GM10248 (cell line): ENCODE measurements at regions of chr3 and their contacts with region 1.

Region 1: GRCh38 chr3:58532794-58533220 is 4.2 kb downstream of the ACOX2 start:
- DNase-seq: peak; percentile 90
- CTCF ChIP-seq: peak; percentile 94

Region 2: GRCh38 chr3:58324391-58325390 is 208.1 kb before region 1 on chr3:
- CTCF ChIA-PET with region 1: interaction called, 16 read pairs
- POLR2A ChIA-PET with region 1: no interaction called
- DNase-seq: no peak
- CTCF ChIP-seq: no peak

Region 3: GRCh38 chr3:58520403-58521335 is 12.1 kb before region 1 on chr3:
- CTCF ChIA-PET with region 1: interaction called, 13 read pairs
- POLR2A ChIA-PET with region 1: no interaction called
- DNase-seq: peak; percentile 39
- CTCF ChIP-seq: no peak

Region 4: DNA sequence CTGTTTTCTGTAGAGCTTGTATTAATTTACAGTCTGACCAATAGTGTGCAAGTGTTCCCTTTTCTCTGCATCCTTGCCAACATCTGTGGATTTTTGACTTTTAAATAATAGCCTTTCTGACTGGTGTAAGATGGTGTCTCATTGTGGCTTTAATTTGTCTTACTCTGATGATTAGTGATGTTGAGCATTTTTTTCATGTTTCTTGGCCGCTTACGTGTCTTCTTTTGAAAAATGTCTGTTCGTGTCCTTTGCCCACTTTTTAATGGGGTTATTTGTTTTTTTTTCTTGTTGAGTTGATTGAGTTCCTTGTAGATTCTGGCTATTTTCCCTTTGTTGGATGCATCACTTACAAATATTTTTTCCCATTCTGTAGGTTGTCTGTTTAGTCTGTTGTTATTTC is 11.7 kb after region 1 on chr3:
- CTCF ChIA-PET with region 1: no interaction called
- POLR2A ChIA-PET with region 1: no interaction called
- DNase-seq: no peak
- CTCF ChIP-seq: no peak

Region 5: DNA sequence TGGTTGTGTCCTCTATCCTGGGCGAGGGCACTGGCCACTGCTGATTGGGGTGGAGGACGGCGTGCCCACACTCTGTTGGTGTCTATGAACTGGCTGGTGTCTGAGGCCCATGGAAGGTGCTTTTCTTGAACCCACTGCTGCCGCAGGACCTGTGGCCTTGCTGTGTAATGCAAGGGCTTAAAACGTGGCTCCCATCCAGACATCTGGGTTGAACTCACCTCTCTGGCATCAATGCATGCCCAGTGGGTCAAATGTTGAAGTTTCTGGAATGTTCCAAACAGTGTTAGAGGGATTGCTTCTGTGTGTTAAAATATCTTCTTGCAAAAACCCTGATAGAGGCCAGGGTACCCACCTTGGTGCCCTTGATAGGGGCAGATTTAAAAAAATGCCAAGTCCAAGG is 91.2 kb after region 1 on chr3:
- CTCF ChIA-PET with region 1: no interaction called
- POLR2A ChIA-PET with region 1: no interaction called
- DNase-seq: no peak
- CTCF ChIP-seq: no peak